Naive thymus-derived CD4-positive, alpha-beta T cell (primary cell): ENCODE measurements at regions of chr3 and their contacts with region 1.

Region 1: DNA sequence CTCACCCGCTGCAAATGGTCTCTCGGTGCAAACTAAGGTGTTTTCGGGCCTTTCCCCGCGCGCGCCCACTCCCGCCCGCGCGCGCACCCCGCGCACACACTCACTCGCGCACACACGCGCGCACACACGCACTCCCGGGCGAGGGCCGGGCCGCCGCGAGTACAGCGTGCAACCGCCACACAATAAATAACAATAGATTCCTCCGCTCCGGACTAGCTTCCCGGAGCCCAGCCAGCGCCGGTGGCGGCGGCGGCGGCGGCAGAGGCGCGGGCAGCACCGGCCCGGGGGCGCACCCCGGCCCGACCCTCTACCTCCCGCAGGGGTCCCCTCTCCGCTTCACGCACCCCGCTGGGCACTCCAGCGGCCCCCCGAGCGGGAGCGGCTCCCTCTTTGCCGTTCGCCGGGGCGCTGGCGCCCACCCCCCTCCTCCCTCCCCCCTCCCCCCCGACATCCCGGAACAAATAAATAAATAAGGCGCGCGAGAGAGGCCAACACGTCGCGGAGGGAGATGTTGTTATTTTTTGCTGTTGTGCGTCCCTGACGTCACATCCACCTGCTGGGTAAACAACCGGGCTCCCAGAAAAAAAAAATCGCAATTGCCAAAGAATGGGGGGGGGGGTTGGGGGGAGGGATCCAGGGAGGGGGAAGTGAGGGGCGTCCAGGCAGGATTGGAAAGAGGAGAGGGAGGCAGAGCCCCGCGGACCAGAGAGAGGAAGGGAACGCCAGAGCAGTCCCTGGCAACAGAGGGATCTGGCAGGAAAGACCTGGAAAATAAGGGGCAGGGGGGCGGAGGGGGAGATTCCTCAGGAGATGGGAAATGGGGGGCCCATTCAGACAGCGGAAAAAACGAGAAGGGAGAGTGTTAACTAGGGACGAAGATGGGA is at the start of gene FOXP1:
- DNase-seq: peak; percentile 62 to 80 (median 72)
- ATAC-seq: peak; percentile 77
- H3K4me3 ChIP-seq: peak within 1 kb of the TSS; percentile 76
- H3K4me3 Mint-ChIP-seq: peak within 1 kb of the TSS; percentile 94 to 99 (median 98)
- H3K27ac ChIP-seq: peak within 1 kb of the TSS; percentile 85
- H3K27ac Mint-ChIP-seq: peak within 1 kb of the TSS; percentile 94 to 99 (median 98)
- H3K4me1 ChIP-seq: peaks cover 7 to 16% of the 10 kb centered on the region in 2 donors
- H3K4me1 Mint-ChIP-seq: peaks cover 12 to 44% (median 33%) of the 10 kb centered on the region in 7 donors
- H3K27me3 ChIP-seq: no peaks in the 10 kb centered on the region
- H3K27me3 Mint-ChIP-seq: peaks cover 0 to 38% (median 0%) of the 10 kb centered on the region in 5 donors
- total RNA-seq, gene FOXP1: 104 to 537 (median 456) TPM

Region 2: DNA sequence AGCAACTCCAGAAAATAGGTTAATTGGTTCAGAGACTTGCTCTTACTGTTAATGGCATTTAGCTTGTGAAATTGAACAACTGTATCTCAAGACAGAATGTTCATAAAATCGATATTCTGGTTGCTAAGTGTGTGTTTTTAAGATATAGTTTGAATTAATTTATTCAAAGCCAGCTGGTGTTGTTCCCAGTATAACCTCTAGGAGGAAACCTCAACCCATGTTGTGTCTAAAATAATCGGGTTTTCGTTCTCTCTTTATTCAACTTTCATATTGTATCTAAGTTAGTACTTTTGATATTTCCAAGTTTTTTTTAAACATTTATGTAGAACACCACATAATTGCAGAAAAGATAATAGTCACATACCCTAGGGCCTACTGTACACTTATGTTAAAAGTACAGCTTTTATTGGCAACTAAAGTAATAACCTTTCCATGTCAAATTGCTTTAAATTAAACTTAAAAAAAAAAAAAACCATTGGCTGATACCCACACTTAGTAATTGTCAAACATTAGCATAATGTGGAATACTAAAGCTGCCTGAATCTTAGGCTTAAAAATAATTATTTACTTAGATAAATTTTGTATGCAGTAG is 1493.4 kb before region 1 on chr3:
- CTCF ChIA-PET with region 1: no interaction called
- POLR2A ChIA-PET with region 1: no interaction called
- intact Hi-C with region 1: loop called in 1 of 2 experiments (anchors 10 kb)
- DNase-seq: peak in 2 of 9 donors; percentile 2 to 4
- ATAC-seq: no peak
- H3K4me3 ChIP-seq: no peak overlapping the region
- H3K4me3 Mint-ChIP-seq: no peak overlapping the region
- H3K27ac ChIP-seq: no peak overlapping the region
- H3K27ac Mint-ChIP-seq: no peak overlapping the region
- H3K4me1 ChIP-seq: no peaks in the 10 kb centered on the region
- H3K4me1 Mint-ChIP-seq: no peaks in the 10 kb centered on the region
- H3K27me3 ChIP-seq: no peaks in the 10 kb centered on the region
- H3K27me3 Mint-ChIP-seq: peaks cover 4 to 23% (median 9%) of the 10 kb centered on the region in 5 donors

Region 3: DNA sequence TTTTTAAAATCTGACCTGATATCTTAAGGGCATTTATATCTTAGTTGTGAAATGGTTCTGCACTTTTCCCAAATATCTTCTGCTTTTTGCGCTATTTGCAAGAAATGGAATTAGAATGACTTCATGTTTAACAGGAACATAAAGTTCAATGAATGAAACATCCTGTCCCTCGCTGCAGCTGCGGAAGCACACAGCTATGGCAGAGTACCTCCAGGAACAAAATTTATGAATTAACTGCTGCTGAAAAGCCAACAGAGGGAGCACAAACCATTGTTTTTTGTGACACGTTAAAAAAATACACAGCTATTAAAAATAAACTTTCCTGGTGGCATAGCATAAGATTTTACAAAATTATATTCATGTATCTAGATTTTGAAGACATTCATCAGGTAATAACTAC is 867.0 kb before region 1 on chr3:
- CTCF ChIA-PET with region 1: no interaction called
- POLR2A ChIA-PET with region 1: no interaction called
- intact Hi-C with region 1: loop called in 1 of 2 experiments (anchors 2 kb)
- DNase-seq: peak in 4 of 9 donors; percentile 10 to 36 (median 28)
- ATAC-seq: no peak
- H3K4me3 ChIP-seq: no peak overlapping the region
- H3K4me3 Mint-ChIP-seq: no peak overlapping the region
- H3K27ac ChIP-seq: no peak overlapping the region
- H3K27ac Mint-ChIP-seq: no peak overlapping the region
- H3K4me1 ChIP-seq: no peaks in the 10 kb centered on the region
- H3K4me1 Mint-ChIP-seq: peaks cover 0 to 4% (median 3%) of the 10 kb centered on the region in 7 donors
- H3K27me3 ChIP-seq: no peaks in the 10 kb centered on the region
- H3K27me3 Mint-ChIP-seq: peaks cover 10 to 16% (median 13%) of the 10 kb centered on the region in 5 donors

Region 4: GRCh38 chr3:71087143-71088018 is 496.4 kb before region 1 on chr3:
- CTCF ChIA-PET with region 1: no interaction called
- POLR2A ChIA-PET with region 1: no interaction called
- intact Hi-C with region 1: loop called in 1 of 2 experiments (anchors 1 kb)
- DNase-seq: peak in 8 of 9 donors; percentile 39 to 76 (median 58)
- ATAC-seq: peak; percentile 79
- H3K4me3 ChIP-seq: peak overlapping the region; percentile 7
- H3K4me3 Mint-ChIP-seq: peak overlapping the region; percentile 39 to 78 (median 70)
- H3K27ac ChIP-seq: peak overlapping the region; percentile 42
- H3K27ac Mint-ChIP-seq: peak overlapping the region; percentile 43 to 98 (median 92)
- H3K4me1 ChIP-seq: peaks cover 34 to 69% of the 10 kb centered on the region in 2 donors
- H3K4me1 Mint-ChIP-seq: peaks cover 61 to 94% (median 89%) of the 10 kb centered on the region in 7 donors
- H3K27me3 ChIP-seq: no peaks in the 10 kb centered on the region
- H3K27me3 Mint-ChIP-seq: no peaks in the 10 kb centered on the region

Region 5: DNA sequence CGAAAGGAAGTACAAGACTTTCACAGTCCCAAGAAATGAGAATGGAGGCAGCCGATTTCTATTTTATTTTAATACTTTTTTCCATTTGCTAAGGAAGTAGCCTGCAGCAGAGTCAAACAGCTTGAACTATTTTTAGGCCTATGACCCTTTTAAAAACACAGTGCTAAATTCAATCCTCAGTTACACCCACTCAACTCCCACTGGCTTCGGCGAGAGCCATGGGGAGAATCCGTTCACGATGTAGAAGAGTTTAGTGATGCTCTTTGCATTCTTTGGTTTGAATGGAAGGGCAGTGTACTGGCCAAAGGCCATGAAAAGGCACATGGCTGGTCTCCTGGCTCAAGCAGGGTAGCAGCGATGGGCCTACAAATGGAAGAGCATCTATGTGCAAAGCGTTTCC is 343.8 kb before region 1 on chr3:
- CTCF ChIA-PET with region 1: no interaction called
- POLR2A ChIA-PET with region 1: no interaction called
- intact Hi-C with region 1: no loop called
- DNase-seq: no peak
- ATAC-seq: no peak
- H3K4me3 ChIP-seq: no peak overlapping the region
- H3K4me3 Mint-ChIP-seq: peak overlapping the region in 1 of 10 donors; percentile 22
- H3K27ac ChIP-seq: no peak overlapping the region
- H3K27ac Mint-ChIP-seq: peak overlapping the region in 7 of 9 donors; percentile 34 to 81 (median 62)
- H3K4me1 ChIP-seq: no peaks in the 10 kb centered on the region
- H3K4me1 Mint-ChIP-seq: peaks cover 0 to 84% (median 73%) of the 10 kb centered on the region in 7 donors
- H3K27me3 ChIP-seq: no peaks in the 10 kb centered on the region
- H3K27me3 Mint-ChIP-seq: peaks cover 0 to 7% (median 0%) of the 10 kb centered on the region in 5 donors

Region 6: GRCh38 chr3:71369701-71370391 is 214.0 kb before region 1 on chr3:
- CTCF ChIA-PET with region 1: no interaction called
- POLR2A ChIA-PET with region 1: no interaction called
- intact Hi-C with region 1: loop called in 1 of 2 experiments (anchors 1 kb)
- DNase-seq: no peak
- ATAC-seq: no peak
- H3K4me3 ChIP-seq: no peak overlapping the region
- H3K4me3 Mint-ChIP-seq: peak overlapping the region in 2 of 10 donors; percentile 12 to 73
- H3K27ac ChIP-seq: peak overlapping the region; percentile 88
- H3K27ac Mint-ChIP-seq: peak overlapping the region in 8 of 9 donors; percentile 88 to 100 (median 96)
- H3K4me1 ChIP-seq: peaks cover 19 to 78% of the 10 kb centered on the region in 2 donors
- H3K4me1 Mint-ChIP-seq: peaks cover 10 to 94% (median 89%) of the 10 kb centered on the region in 7 donors
- H3K27me3 ChIP-seq: no peaks in the 10 kb centered on the region
- H3K27me3 Mint-ChIP-seq: peaks cover 0 to 39% (median 0%) of the 10 kb centered on the region in 5 donors

Region 7: DNA sequence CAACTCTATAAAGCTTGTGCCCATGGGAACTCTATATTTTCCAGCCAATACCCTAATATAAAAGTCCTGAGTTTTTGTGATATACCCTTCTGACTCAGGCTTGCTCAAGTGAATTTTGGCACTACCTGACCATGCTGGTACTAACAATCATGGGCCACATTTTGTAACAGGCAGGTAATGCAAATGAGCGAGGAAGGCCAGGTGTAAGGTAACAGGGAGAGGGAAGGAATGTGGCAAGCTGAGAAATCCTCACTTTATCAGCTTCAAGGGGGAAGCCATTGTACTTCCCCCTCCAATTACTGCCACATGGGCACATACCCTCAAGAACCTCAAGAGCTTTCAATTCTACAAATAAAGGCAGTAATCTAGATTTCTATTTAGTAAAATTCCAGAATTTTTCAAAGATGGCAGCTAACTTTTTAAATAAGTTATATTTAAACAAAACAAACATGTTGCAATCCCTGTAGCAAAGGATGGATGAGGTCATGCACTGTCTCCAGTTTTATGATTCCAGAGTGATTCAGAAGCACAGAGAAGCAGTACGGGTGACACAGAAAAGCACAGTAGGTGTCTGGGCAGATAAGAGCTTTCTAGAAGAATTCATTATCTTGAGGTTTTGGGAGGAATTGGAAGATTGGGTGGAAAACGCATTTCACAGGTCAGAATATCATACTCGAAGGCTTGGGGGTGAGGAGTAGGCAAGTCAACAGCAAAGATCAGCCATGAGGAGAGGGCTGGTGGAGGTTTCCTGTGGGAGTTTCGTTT is 87.9 kb before region 1 on chr3:
- CTCF ChIA-PET with region 1: no interaction called
- POLR2A ChIA-PET with region 1: interaction called, 5 read pairs
- intact Hi-C with region 1: loop called (anchors 1 kb)
- DNase-seq: peak in 2 of 9 donors; percentile 24 to 34
- ATAC-seq: no peak
- H3K4me3 ChIP-seq: peak overlapping the region; percentile 33
- H3K4me3 Mint-ChIP-seq: peak overlapping the region; percentile 52 to 98 (median 80)
- H3K27ac ChIP-seq: peak overlapping the region; percentile 89
- H3K27ac Mint-ChIP-seq: peak overlapping the region; percentile 77 to 100 (median 98)
- H3K4me1 ChIP-seq: peaks cover 43 to 71% of the 10 kb centered on the region in 2 donors
- H3K4me1 Mint-ChIP-seq: peaks cover 54 to 90% (median 85%) of the 10 kb centered on the region in 7 donors
- H3K27me3 ChIP-seq: no peaks in the 10 kb centered on the region
- H3K27me3 Mint-ChIP-seq: no peaks in the 10 kb centered on the region